ENCODE measurements at regions of chrX and their contacts with region 1.

Region 1: DNA sequence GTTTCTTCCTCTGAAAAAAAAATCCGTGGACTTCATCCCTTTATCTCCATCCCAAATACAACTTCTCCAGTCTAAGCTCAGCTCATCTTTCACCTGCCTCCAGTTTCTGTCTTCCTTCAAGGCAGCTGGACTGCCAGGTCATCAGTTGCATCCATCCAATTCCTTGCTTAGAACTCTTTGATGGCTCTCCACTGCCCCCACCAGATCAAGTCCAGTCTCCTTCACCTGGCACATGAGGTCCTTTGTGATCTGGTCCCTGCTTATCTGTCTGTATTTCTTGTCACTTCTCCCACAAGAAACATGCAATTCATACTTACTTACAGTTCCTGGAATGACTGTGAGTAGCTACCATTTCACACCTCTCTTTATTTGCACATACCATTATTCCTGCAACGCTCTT is 33.8 kb downstream of the OTUD6A start:
- DNase-seq: no peak
- ATAC-seq: peak in 3 of 4 donors; percentile 49 to 67 (median 56)
- H3K4me3 ChIP-seq: no peak overlapping the region
- H3K27ac ChIP-seq: no peak overlapping the region
- H3K4me1 ChIP-seq: no peaks in the 10 kb centered on the region
- H3K27me3 ChIP-seq: peaks cover 0 to 11% of the 10 kb centered on the region in 2 donors
- CTCF ChIP-seq: peak in 2 of 4 donors; percentile 15 to 27
- POLR2A ChIP-seq: no peak

Region 2: GRCh38 chrX:69630147-69630546 is 465.9 kb before region 1 on chrX:
- intact Hi-C with region 1: no loop called
- DNase-seq: no peak
- ATAC-seq: no peak
- H3K4me3 ChIP-seq: no peak overlapping the region
- H3K27ac ChIP-seq: no peak overlapping the region
- H3K4me1 ChIP-seq: no peaks in the 10 kb centered on the region
- H3K27me3 ChIP-seq: no peaks in the 10 kb centered on the region
- CTCF ChIP-seq: no peak
- POLR2A ChIP-seq: no peak

Region 3: GRCh38 chrX:70030301-70030767 is 65.7 kb before region 1 on chrX:
- intact Hi-C with region 1: loop called (anchors 10 kb)
- DNase-seq: no peak
- ATAC-seq: peak; percentile 70 to 90 (median 82)
- H3K4me3 ChIP-seq: no peak overlapping the region
- H3K27ac ChIP-seq: no peak overlapping the region
- H3K4me1 ChIP-seq: no peaks in the 10 kb centered on the region
- H3K27me3 ChIP-seq: no peaks in the 10 kb centered on the region
- CTCF ChIP-seq: peak; percentile 73 to 80 (median 76)
- POLR2A ChIP-seq: no peak

Region 4: GRCh38 chrX:70176938-70177533 is 81.0 kb after region 1 on chrX and contains the start of gene DGAT2L6:
- intact Hi-C with region 1: no loop called
- DNase-seq: no peak
- ATAC-seq: no peak
- H3K4me3 ChIP-seq: no peak within 1 kb of the TSS
- H3K27ac ChIP-seq: no peak within 1 kb of the TSS
- H3K4me1 ChIP-seq: no peaks in the 10 kb centered on the region
- H3K27me3 ChIP-seq: no peaks in the 10 kb centered on the region
- CTCF ChIP-seq: no peak
- POLR2A ChIP-seq: no peak
- total RNA-seq, gene DGAT2L6: not detected